Sigmoid colon (tissue), 7 donors: ENCODE measurements at regions of chr5 and their contacts with region 1.

Region 1: DNA sequence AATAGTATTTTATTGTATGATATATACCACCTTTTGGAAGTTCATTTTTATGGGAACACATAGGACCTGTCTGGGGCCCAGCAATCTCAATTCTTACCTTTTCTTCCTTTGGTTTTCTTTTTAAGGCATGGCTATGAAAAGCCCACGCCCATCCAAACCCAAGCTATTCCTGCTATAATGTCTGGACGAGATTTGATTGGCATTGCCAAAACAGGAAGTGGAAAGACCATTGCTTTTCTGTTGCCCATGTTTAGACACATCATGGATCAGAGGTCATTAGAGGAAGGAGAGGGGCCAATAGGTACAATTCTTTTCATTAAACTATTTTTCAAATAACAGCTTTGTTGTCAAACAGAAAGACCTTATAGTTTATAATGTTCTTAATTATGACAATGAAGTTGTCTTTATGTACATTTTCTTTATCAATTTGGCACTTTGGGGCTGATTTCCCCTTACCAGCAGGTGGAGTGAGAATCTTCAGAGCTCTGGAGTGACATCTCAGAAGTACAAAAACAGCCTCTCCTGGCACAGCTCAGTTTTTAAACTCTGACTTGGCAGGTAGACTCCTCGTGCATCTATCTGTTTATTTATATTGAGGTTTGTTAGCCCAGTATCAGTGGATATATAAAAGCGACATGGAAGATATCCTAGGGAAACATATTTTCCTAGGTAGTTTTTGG is 25.8 kb downstream of the DDX46 start:
- DNase-seq: no peak
- H3K4me3 ChIP-seq: no peak overlapping the region
- H3K27ac ChIP-seq: no peak overlapping the region
- H3K4me1 ChIP-seq: no peaks in the 10 kb centered on the region
- H3K27me3 ChIP-seq: no peaks in the 10 kb centered on the region
- CTCF ChIP-seq: no peak
- EP300 ChIP-seq: no peak
- POLR2A ChIP-seq: no peak

Region 2: GRCh38 chr5:134692722-134693121 is 91.7 kb before region 1 on chr5:
- intact Hi-C with region 1: loop called (anchors 10 kb)
- DNase-seq: no peak
- H3K4me3 ChIP-seq: no peak overlapping the region
- H3K27ac ChIP-seq: no peak overlapping the region
- H3K4me1 ChIP-seq: no peaks in the 10 kb centered on the region
- H3K27me3 ChIP-seq: no peaks in the 10 kb centered on the region
- CTCF ChIP-seq: no peak
- EP300 ChIP-seq: no peak
- POLR2A ChIP-seq: no peak

Region 3: GRCh38 chr5:134825212-134825611 is 40.8 kb after region 1 on chr5:
- intact Hi-C with region 1: loop called (anchors 10 kb)
- DNase-seq: no peak
- H3K4me3 ChIP-seq: no peak overlapping the region
- H3K27ac ChIP-seq: no peak overlapping the region
- H3K4me1 ChIP-seq: no peaks in the 10 kb centered on the region
- H3K27me3 ChIP-seq: no peaks in the 10 kb centered on the region
- CTCF ChIP-seq: no peak
- EP300 ChIP-seq: no peak
- POLR2A ChIP-seq: no peak